HepG2 (cell line): ENCODE measurements at regions of chr16 and their contacts with region 1.

Region 1: GRCh38 chr16:68704232-68704867 is 32.7 kb upstream of the CDH1 start:
- DNase-seq: peak; percentile 89
- ATAC-seq: peak; percentile 84
- H3K4me3 ChIP-seq: no peak overlapping the region
- H3K27ac ChIP-seq: no peak overlapping the region
- H3K4me1 ChIP-seq: peaks cover 40% of the 10 kb centered on the region
- H3K27me3 ChIP-seq: peaks cover 0 to 23% of the 10 kb centered on the region in 2 experiments; a peak in 3 of 5 replicates
- CTCF ChIP-seq: peak; percentile 99
- EP300 ChIP-seq: 0 out of 4 replicates have a peak, but pooled peaks of 1 of the 2 experiments have one; percentile 39
- POLR2A ChIP-seq: no peak
- RAD21 ChIP-seq: peak; percentile 99

Region 2: DNA sequence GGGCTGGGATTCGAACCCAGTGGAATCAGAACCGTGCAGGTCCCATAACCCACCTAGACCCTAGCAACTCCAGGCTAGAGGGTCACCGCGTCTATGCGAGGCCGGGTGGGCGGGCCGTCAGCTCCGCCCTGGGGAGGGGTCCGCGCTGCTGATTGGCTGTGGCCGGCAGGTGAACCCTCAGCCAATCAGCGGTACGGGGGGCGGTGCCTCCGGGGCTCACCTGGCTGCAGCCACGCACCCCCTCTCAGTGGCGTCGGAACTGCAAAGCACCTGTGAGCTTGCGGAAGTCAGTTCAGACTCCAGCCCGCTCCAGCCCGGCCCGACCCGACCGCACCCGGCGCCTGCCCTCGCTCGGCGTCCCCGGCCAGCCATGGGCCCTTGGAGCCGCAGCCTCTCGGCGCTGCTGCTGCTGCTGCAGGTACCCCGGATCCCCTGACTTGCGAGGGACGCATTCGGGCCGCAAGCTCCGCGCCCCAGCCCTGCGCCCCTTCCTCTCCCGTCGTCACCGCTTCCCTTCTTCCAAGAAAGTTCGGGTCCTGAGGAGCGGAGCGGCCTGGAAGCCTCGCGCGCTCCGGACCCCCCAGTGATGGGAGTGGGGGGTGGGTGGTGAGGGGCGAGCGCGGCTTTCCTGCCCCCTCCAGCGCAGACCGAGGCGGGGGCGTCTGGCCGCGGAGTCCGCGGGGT is 32.8 kb after region 1 on chr16 and contains the start of gene CDH1:
- CTCF ChIA-PET with region 1: no interaction called
- POLR2A ChIA-PET with region 1: interaction called, 19 read pairs
- in situ Hi-C with region 1: no loop called
- intact Hi-C with region 1: no loop called
- DNase-seq: no peak
- ATAC-seq: peak; percentile 48
- H3K4me3 ChIP-seq: peak within 1 kb of the TSS; percentile 48 to 78 (median 60)
- H3K27ac ChIP-seq: no peak within 1 kb of the TSS
- H3K4me1 ChIP-seq: peaks cover 91% of the 10 kb centered on the region
- H3K27me3 ChIP-seq: peaks cover 1 to 26% of the 10 kb centered on the region in 2 experiments; a peak in 3 of 5 replicates
- CTCF ChIP-seq: no peak
- EP300 ChIP-seq: no peak
- POLR2A ChIP-seq: 0 out of 4 replicates have a peak, but pooled peaks of 1 of the 2 experiments have one; percentile 38
- RAD21 ChIP-seq: peak; percentile 32; the same call in 1 of the 2 replicates
- total RNA-seq, gene CDH1: 0.70 and 0.95 TPM in 2 replicates

Region 3: DNA sequence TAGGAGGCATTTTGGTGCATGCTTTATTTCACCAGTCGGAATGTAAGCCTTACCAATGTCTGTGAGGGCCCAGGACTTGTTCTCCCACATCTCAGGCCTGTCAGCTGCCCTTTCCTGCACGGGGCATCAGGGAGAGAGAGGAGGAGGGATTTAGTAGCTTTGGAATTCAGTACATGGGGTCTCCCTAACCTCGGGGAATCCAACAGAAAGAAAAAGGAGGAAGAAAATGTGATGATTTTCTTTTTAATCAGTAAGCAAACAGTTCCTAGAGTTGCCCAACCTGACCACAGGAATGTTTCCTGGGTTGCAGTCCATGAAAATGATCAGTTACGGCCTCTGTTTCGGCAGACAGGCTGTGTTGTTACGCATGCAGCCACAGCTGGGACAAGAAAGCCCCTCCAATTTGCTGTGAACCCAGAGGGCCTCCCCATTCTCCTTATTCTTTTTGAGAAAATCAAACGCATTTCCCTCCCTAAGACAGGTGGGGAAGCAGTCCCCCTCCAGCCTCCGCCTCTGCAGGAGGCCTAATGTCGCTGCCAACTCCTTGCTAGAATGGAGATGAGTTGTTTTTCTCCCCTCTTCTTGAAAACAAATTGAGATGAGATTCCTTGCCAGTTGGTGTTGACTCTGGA is 85.9 kb after region 1 on chr16:
- CTCF ChIA-PET with region 1: interaction called, 3 read pairs
- POLR2A ChIA-PET with region 1: interaction called, 18 read pairs
- in situ Hi-C with region 1: no loop called
- intact Hi-C with region 1: loop called (anchors 1 kb)
- DNase-seq: peak; percentile 96
- ATAC-seq: peak; percentile 70
- H3K4me3 ChIP-seq: peak overlapping the region; percentile 11 to 58 (median 24); a peak in 5 of 6 replicates
- H3K27ac ChIP-seq: peak overlapping the region; percentile 74
- H3K4me1 ChIP-seq: peaks cover 86% of the 10 kb centered on the region
- H3K27me3 ChIP-seq: no peaks in the 10 kb centered on the region
- CTCF ChIP-seq: 0 out of 2 replicates have a peak, but pooled peaks have one; percentile 14
- EP300 ChIP-seq: peak; percentile 80 to 93; a peak in 3 of 4 replicates
- POLR2A ChIP-seq: peak in 1 of 2 experiments; percentile 69; a peak in 2 of 4 replicates
- RAD21 ChIP-seq: peak; percentile 23; the same call in 1 of the 2 replicates

Region 4: DNA sequence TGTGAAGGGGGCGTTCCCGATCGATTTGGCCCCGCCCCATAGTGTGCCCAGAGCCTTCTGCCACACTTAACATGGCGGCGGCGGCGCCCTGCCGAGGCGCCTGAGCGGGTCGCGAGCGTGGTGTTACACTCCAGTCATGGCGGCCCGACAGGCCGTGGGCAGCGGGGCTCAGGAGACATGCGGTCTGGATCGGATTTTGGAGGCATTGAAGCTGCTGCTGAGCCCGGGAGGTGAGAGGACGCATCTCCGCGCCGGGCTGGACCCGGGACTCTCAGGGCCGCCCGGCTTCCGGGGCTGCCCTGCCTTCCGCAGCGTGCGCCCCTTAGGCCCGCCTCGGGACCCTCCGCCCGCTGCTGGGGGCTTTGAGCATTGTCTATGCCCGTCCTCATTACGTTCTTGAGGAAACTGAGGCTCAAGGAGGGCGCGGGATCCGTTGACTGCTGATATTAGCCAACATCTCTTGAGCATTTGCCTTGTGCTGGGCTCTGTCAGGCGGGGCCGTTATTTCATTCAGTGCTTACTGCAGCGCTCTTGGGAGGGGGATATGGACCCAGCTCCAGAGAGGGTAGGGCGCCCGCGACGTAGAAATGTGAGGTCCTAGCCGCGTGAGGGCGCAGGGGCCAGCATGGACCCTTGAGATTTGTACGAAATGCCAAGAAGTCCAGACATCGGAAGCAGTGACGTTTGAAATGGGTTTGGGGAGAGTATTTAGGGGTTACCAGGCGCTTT is 139.3 kb after region 1 on chr16 and contains the start of gene TANGO6:
- CTCF ChIA-PET with region 1: interaction called, 6 read pairs
- POLR2A ChIA-PET with region 1: interaction called, 3 read pairs
- in situ Hi-C with region 1: no loop called
- intact Hi-C with region 1: loop called (anchors 1 kb)
- DNase-seq: peak; percentile 85
- ATAC-seq: peak; percentile 97
- H3K4me3 ChIP-seq: peak within 1 kb of the TSS; percentile 75 to 97 (median 91)
- H3K27ac ChIP-seq: peak within 1 kb of the TSS; percentile 87
- H3K4me1 ChIP-seq: peaks cover 27% of the 10 kb centered on the region
- H3K27me3 ChIP-seq: no peaks in the 10 kb centered on the region; a peak in 2 of 5 replicates
- CTCF ChIP-seq: peak; percentile 88
- EP300 ChIP-seq: 0 out of 4 replicates have a peak, but pooled peaks of 1 of the 2 experiments have one; percentile 22
- POLR2A ChIP-seq: peak; percentile 85 to 94
- RAD21 ChIP-seq: peak; percentile 53
- total RNA-seq, gene TANGO6: 13.3 and 15.3 TPM in 2 replicates

Region 5: DNA sequence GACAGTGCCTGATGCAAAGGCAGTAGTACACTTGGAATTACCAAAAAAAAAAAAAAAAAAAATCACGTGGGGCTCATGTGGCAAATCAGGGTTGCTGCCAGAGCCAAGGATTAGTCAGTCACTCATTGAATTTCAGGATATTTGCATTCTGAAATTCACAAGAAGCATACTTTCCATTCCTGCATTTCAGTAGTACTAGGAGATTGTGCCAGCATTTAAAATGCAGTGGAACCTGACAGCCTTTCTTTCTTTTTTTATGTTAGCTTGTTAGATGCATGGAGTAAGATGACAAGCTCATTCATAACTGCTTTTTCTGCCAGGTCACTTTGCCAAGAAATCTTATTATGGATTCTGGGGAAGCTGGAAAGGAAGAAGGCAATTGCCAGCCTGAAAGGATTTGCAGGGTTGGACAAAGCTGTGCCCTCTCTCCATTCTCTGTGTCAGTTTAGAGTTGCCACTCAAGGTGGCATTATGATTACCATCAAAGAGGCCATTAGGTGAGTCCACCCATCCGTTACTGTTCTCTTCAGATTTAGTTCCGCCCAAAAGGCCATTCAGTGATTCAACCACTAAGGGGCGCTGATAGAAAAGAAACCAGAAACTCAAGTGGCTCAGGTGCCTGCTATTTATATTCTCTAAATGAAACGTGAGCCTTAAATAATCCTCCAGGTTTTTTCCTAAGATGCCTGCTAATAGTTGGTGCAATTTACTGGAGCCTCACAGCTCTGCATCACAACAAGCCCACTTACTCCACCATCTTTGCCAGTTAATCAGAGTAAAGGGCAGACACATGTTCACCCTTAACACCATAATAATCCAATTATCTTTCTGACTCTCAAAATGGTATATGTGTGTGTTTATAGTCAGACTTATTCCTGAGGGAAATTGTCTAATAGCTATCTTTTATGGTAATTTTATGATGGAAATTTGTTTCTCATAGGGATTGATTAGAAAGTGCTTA is 197.9 kb after region 1 on chr16:
- CTCF ChIA-PET with region 1: no interaction called
- POLR2A ChIA-PET with region 1: no interaction called
- in situ Hi-C with region 1: no loop called
- intact Hi-C with region 1: no loop called
- DNase-seq: peak; percentile 63
- ATAC-seq: peak; percentile 74
- H3K4me3 ChIP-seq: no peak overlapping the region
- H3K27ac ChIP-seq: no peak overlapping the region
- H3K4me1 ChIP-seq: no peaks in the 10 kb centered on the region
- H3K27me3 ChIP-seq: no peaks in the 10 kb centered on the region
- CTCF ChIP-seq: peak; percentile 80
- EP300 ChIP-seq: no peak
- POLR2A ChIP-seq: no peak
- RAD21 ChIP-seq: peak; percentile 85